HCT116 (cell line): ENCODE measurements at regions of chr17 and their contacts with region 1.

Region 1: DNA sequence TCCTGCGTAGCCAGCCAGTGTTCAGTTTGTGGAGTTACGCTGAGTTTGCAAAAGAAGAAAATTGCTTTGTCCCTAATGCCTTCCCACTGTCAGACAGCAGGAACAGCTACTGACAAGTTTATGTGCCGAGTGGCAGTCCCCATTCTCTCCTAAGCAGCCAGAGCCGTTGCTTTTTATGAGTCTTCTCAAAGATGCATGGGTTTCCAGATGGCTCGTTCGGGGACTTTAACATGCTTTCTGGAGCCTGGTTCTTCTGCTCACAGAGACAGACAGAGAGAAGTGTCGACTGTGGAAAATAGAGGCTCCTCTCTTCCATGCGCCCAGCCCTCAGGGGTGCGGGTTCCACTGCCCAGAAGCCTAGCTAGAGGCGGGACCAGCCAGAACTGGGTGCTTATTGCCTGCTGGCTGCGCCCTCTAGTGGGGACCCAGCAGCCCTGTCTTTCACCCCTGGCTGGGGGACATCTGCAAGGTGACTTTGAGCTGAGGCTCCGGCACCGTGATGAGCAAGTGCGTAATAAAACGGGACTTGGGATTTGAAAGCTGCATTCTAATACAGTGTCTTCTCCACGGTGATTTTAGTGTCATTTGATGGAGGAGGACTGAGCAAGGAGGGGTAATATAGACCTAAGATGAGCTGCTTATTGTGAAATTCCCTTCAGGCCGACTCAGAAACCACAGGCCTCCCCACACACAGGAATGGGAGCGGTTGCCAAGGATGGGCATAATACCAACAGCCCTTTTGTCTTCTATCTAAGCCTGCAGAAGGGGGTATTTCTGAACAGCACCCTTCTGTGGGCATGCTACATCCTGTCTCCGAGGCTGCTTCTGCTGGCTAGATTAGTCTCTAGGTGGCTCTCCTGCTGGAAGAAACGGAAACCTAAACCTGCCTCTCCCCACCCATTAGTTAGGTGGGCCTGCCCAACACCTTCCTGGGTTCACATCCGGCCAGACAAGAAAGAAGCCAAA is 73.1 kb downstream of the CCDC182 start:
- DNase-seq: peak; percentile 47
- ATAC-seq: peak; percentile 100
- H3K4me3 ChIP-seq: no peak overlapping the region
- H3K27ac ChIP-seq: no peak overlapping the region
- H3K4me1 ChIP-seq: peaks cover 0 to 3% of the 10 kb centered on the region in 2 experiments; a peak in 1 of 4 replicates
- H3K27me3 ChIP-seq: no peaks in the 10 kb centered on the region
- CTCF ChIP-seq: peak; percentile 93 to 100 (median 100)
- POLR2A ChIP-seq: no peak
- RAD21 ChIP-seq: peak; percentile 95

Region 2: DNA sequence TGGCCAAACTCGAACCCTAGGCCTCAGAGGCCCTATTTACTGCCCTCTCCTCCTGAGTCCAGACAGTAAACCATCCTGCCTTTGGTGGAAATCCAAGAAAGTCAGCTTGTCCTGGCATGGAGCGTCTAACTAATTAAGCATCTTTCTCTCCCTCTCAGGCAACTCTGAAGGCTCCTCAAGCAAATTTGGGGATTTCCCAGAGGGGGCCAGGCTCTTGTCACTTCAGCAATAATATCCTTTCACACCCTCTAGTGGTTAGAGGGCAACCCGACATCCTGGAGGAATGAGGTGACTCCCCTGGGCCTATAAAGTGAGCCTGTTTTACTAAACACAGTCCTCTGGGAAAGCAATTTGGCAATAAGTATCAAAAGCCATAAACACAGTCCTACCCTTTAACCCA is 1018.1 kb before region 1 on chr17:
- CTCF ChIA-PET with region 1: no interaction called
- POLR2A ChIA-PET with region 1: no interaction called
- RAD21 ChIA-PET with region 1: no interaction called
- intact Hi-C with region 1: no loop called
- DNase-seq: peak; percentile 63
- ATAC-seq: peak; percentile 96
- H3K4me3 ChIP-seq: no peak overlapping the region
- H3K27ac ChIP-seq: no peak overlapping the region
- H3K4me1 ChIP-seq: no peaks in the 10 kb centered on the region
- H3K27me3 ChIP-seq: no peaks in the 10 kb centered on the region
- CTCF ChIP-seq: peak; percentile 71 to 90 (median 89)
- POLR2A ChIP-seq: no peak
- RAD21 ChIP-seq: peak; percentile 72

Region 3: DNA sequence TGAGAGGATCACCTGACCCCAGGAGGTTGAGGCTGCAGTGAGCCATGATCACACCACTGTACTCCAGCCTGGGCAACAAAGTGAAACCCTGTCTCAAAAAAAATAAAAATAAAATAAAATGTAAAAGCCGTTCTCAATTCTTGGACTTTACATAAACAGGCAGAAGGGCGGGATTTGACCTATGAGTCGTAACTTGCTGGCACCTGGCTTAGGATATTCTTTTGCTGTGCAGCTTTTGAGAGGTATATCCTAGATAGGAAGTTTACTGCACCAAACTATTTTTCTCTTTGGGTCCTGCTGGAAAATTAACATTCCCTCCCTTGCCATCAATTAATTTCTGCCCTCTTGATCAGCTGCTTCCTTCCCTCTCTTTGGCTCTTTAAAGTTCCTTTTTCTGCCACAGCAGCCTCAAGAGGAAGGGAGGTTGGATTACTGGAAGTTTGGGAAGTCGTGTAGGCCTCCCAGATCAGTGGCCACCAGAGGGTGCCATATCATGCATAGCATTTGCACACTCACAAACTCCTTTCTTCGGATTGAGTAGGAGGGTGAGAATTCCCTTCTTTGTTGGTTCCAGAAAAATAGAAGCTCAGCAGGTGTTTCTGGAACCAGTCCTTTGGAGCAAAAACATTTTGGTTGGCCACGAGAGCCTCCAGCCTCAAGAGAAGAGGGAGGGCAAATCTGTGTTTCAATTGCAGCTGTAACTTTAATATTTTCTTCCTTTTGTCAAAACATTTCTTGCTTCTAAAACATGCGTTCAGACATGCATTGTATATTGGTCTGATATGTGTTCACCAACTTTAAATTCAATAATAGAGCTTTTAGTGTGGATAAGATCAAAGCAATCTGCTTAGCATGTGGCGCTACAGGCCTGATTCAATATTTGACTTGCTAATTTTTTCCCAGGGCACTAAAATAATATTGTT is 74.2 kb before region 1 on chr17:
- CTCF ChIA-PET with region 1: interaction called, 35 read pairs
- POLR2A ChIA-PET with region 1: no interaction called
- RAD21 ChIA-PET with region 1: interaction called in 1 of 2 experiments, 4 read pairs
- intact Hi-C with region 1: loop called (anchors 1 kb)
- DNase-seq: peak; percentile 65
- ATAC-seq: peak; percentile 91
- H3K4me3 ChIP-seq: no peak overlapping the region
- H3K27ac ChIP-seq: peak overlapping the region; percentile 37; the same call in 1 of the 2 replicates
- H3K4me1 ChIP-seq: peaks cover 5 to 13% of the 10 kb centered on the region in 2 experiments; a peak in 3 of 4 replicates
- H3K27me3 ChIP-seq: no peaks in the 10 kb centered on the region
- CTCF ChIP-seq: peak; percentile 93 to 98 (median 98)
- POLR2A ChIP-seq: no peak
- RAD21 ChIP-seq: peak; percentile 80

Region 4: GRCh38 chr17:57685505-57686132 is 13.7 kb after region 1 on chr17:
- CTCF ChIA-PET with region 1: interaction called, 35 read pairs
- POLR2A ChIA-PET with region 1: no interaction called
- RAD21 ChIA-PET with region 1: no interaction called
- intact Hi-C with region 1: no loop called
- DNase-seq: no peak
- ATAC-seq: peak; percentile 36
- H3K4me3 ChIP-seq: no peak overlapping the region
- H3K27ac ChIP-seq: no peak overlapping the region
- H3K4me1 ChIP-seq: no peaks in the 10 kb centered on the region; a peak in 1 of 4 replicates
- H3K27me3 ChIP-seq: no peaks in the 10 kb centered on the region
- CTCF ChIP-seq: no peak
- POLR2A ChIP-seq: no peak
- RAD21 ChIP-seq: no peak

Region 5: DNA sequence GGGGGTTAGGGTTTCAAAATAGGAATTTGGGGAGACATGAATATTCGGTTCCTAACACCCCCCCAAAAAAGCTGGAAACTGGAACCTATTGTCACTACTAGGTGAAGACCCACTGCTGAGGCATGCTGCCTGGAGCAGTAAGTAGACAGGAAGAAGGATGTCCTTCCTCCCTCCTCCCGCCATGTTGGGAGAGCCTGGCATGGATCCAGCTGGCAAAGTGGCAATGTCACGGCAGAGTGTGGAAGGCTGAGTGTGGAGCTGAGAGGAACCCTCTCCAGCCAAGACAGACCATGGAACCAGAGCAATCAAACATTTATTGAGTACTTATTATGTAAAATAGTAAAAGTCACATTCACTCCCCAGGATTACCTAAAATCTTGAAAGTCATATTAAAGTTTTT is 24.1 kb after region 1 on chr17:
- CTCF ChIA-PET with region 1: interaction called, 14 read pairs
- POLR2A ChIA-PET with region 1: no interaction called
- RAD21 ChIA-PET with region 1: no interaction called
- intact Hi-C with region 1: no loop called
- DNase-seq: no peak
- ATAC-seq: no peak
- H3K4me3 ChIP-seq: no peak overlapping the region
- H3K27ac ChIP-seq: no peak overlapping the region
- H3K4me1 ChIP-seq: peaks cover 0 to 5% of the 10 kb centered on the region in 2 experiments; a peak in 1 of 4 replicates
- H3K27me3 ChIP-seq: no peaks in the 10 kb centered on the region
- CTCF ChIP-seq: no peak
- POLR2A ChIP-seq: no peak
- RAD21 ChIP-seq: no peak

Region 6: GRCh38 chr17:57747221-57748017 is 75.5 kb after region 1 on chr17:
- CTCF ChIA-PET with region 1: interaction called, 14 read pairs
- POLR2A ChIA-PET with region 1: no interaction called
- RAD21 ChIA-PET with region 1: interaction called in 1 of 2 experiments, 4 read pairs
- intact Hi-C with region 1: no loop called
- DNase-seq: peak; percentile 76
- ATAC-seq: peak; percentile 93
- H3K4me3 ChIP-seq: no peak overlapping the region
- H3K27ac ChIP-seq: no peak overlapping the region
- H3K4me1 ChIP-seq: no peaks in the 10 kb centered on the region
- H3K27me3 ChIP-seq: peaks cover 10% of the 10 kb centered on the region; the same call in 1 of the 2 replicates
- CTCF ChIP-seq: peak; percentile 92 to 98 (median 93)
- POLR2A ChIP-seq: no peak
- RAD21 ChIP-seq: peak; percentile 96